ENCODE measurements at regions of chr3 and their contacts with region 1.

Region 1: DNA sequence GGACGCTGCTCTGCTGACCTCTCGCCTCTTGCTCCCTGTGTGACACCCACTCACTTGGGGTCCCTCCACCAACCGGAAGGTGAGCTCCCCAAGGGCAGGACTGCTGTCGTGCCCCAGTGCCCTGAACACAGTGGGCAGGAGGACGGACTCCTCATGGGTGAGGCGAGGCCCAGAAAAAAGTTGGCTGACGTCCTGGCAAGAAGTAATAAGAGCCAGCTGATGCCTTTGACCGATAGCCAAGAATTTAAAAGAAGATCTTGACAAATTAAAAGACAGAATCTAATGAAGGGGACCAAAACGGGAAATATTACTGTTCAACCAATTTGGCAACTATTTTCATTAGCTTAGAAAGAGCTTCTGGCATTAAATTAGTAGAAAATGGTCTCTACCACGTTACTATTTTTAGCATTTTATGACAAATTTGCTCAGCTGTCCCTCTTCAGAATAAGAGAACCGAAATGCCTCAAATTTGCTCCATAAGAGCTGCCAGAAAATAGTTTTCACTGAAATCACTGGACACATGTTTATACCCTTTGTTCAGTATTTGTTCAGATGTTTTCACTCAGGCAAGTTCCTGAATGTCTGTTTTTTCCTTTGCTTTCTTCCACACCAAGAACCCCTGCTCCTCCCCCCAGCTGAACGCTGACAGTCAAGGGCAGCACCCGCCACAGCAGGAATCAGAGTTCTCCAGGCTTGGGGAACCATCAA is 60.5 kb downstream of the XXYLT1 start:
- DNase-seq: peak; percentile 98
- H3K4me3 ChIP-seq: no peak overlapping the region
- H3K27me3 ChIP-seq: no peaks in the 10 kb centered on the region
- CTCF ChIP-seq: no peak

Region 2: DNA sequence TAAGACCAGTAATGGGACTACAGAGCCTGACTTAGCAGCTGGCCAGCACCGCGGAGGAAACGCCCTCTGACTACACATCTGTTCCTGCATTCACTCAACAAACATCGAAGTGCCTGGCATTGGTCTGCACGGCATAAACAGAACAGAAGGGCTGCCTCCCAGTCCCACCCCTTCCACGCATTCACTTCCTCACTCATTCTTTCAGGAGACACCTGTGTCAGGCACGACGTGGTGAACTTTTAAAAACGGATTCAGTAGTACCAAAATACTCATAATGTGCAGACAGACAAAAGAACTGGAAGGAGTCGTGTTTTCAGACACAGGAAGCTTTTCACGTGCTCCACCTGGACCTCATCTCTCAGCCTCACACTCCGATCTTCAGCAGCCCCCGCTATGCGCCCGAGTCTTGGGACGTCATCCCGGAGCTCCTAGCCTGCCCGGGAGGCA is 62.7 kb before region 1 on chr3:
- CTCF ChIA-PET with region 1: no interaction called
- POLR2A ChIA-PET with region 1: no interaction called
- DNase-seq: peak; percentile 47
- H3K4me3 ChIP-seq: peak overlapping the region; percentile 0; the same call in 1 of the 2 replicates
- H3K27me3 ChIP-seq: no peaks in the 10 kb centered on the region
- CTCF ChIP-seq: no peak

Region 3: GRCh38 chr3:195226900-195227447 is 16.6 kb after region 1 on chr3:
- CTCF ChIA-PET with region 1: interaction called, 12 read pairs
- POLR2A ChIA-PET with region 1: no interaction called
- DNase-seq: no peak
- H3K4me3 ChIP-seq: no peak overlapping the region
- H3K27me3 ChIP-seq: no peaks in the 10 kb centered on the region
- CTCF ChIP-seq: peak; percentile 44